ENCODE measurements at regions of chr3 and their contacts with region 1.

Region 1: GRCh38 chr3:102038477-102039142 is 189.3 kb downstream of the NFKBIZ start:
- DNase-seq: peak; percentile 94
- ATAC-seq: peak; percentile 88
- H3K4me3 ChIP-seq: no peak overlapping the region
- H3K27ac ChIP-seq: peak overlapping the region; percentile 74
- H3K4me1 ChIP-seq: peaks cover 51% of the 10 kb centered on the region
- H3K27me3 ChIP-seq: no peaks in the 10 kb centered on the region
- CTCF ChIP-seq: no peak
- EP300 ChIP-seq: peak; percentile 87 to 94
- POLR2A ChIP-seq: no peak
- RAD21 ChIP-seq: no peak

Region 2: DNA sequence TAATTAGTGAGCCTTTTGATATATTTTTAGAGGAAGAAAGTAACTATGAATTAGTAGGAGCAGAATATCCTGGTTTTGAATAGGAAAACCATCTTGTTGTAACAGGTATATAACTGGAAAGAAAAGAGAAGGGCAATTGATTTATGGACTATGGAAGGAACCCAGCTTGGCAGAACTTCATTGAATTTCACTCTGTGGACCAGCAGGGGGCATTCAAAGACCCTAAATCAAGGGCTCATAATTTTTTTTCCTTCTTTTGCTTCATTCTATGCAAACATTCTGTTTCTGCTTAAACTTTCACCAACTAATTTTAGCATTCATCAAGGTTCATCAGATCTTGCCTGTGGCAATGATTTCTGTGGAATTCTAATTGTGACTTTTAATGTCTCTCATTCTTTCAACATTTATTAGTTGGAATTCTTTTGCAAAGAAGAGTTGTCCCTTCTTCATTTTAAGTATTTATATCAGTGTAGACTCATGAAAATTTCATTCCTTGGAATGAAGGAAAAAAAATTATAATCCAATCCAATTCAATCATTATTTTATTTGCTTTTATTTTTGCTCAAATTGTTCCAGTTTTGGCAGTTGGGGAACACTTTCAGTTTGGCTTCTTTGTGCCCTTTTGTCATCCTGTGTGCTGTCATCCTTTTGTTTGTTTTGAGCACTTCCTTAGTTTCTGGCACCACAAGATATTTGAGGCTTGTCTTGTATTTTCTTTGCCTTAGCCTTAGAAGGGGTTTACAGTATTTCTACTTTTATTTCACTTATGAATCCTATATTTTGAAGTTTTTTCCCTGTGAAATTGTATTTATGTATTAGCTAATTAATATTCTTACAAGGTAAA is 229.2 kb before region 1 on chr3:
- CTCF ChIA-PET with region 1: interaction called, 14 read pairs
- POLR2A ChIA-PET with region 1: no interaction called
- RAD21 ChIA-PET with region 1: interaction called, 17 read pairs
- SMC1A ChIA-PET with region 1: interaction called, 13 read pairs
- in situ Hi-C with region 1: no loop called
- intact Hi-C with region 1: loop called (anchors 5 kb)
- DNase-seq: no peak
- ATAC-seq: peak; percentile 64
- H3K4me3 ChIP-seq: no peak overlapping the region
- H3K27ac ChIP-seq: no peak overlapping the region
- H3K4me1 ChIP-seq: peaks cover 15% of the 10 kb centered on the region
- H3K27me3 ChIP-seq: no peaks in the 10 kb centered on the region
- CTCF ChIP-seq: peak; percentile 56 to 84 (median 65); a peak in 5 of 6 replicates
- EP300 ChIP-seq: no peak
- POLR2A ChIP-seq: no peak
- RAD21 ChIP-seq: peak; percentile 82

Region 3: GRCh38 chr3:101849051-101849720 is 189.4 kb before region 1 on chr3 and contains the start of gene NFKBIZ:
- CTCF ChIA-PET with region 1: interaction called, 4 read pairs
- POLR2A ChIA-PET with region 1: interaction called, 8 read pairs
- RAD21 ChIA-PET with region 1: interaction called, 27 read pairs
- SMC1A ChIA-PET with region 1: interaction called, 19 read pairs
- in situ Hi-C with region 1: no loop called
- intact Hi-C with region 1: loop called (anchors 2 kb)
- DNase-seq: no peak
- ATAC-seq: peak; percentile 78
- H3K4me3 ChIP-seq: peak within 1 kb of the TSS; percentile 75
- H3K27ac ChIP-seq: peak within 1 kb of the TSS; percentile 93
- H3K4me1 ChIP-seq: peaks cover 16% of the 10 kb centered on the region
- H3K27me3 ChIP-seq: no peaks in the 10 kb centered on the region
- CTCF ChIP-seq: no peak
- EP300 ChIP-seq: no peak
- POLR2A ChIP-seq: peak; percentile 95
- RAD21 ChIP-seq: no peak
- polyA plus RNA-seq, gene NFKBIZ: 6.3 to 8.9 TPM

Region 4: DNA sequence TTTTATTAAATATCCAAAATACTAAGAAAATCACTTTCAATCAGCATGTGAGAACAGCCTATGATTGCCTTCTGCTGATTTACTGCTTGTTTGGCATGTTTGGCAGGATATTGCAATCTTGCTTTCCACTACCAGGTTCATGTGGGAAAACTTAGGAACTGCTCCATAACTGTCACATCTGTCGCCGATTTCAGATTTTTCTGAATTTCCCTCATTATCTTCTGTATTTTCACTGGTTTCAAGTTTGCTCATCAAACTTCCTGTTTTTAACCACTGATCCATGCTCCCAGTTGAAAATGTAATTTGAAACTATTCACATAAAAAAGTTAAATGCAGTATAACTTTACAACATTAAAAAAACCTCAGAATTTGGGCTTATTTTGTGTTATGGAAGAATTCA is 96.3 kb before region 1 on chr3:
- CTCF ChIA-PET with region 1: no interaction called
- POLR2A ChIA-PET with region 1: interaction called, 6 read pairs
- RAD21 ChIA-PET with region 1: interaction called, 64 read pairs
- SMC1A ChIA-PET with region 1: interaction called, 19 read pairs
- in situ Hi-C with region 1: no loop called
- intact Hi-C with region 1: loop called (anchors 5 kb)
- DNase-seq: no peak
- ATAC-seq: peak; percentile 1; the same call in 2 of the 3 replicates
- H3K4me3 ChIP-seq: no peak overlapping the region
- H3K27ac ChIP-seq: peak overlapping the region; percentile 23; the same call in 1 of the 2 replicates
- H3K4me1 ChIP-seq: peaks cover 48% of the 10 kb centered on the region
- H3K27me3 ChIP-seq: no peaks in the 10 kb centered on the region
- CTCF ChIP-seq: no peak
- EP300 ChIP-seq: peak; percentile 72 to 78; a peak in 3 of 4 replicates
- POLR2A ChIP-seq: no peak
- RAD21 ChIP-seq: no peak

Region 5: DNA sequence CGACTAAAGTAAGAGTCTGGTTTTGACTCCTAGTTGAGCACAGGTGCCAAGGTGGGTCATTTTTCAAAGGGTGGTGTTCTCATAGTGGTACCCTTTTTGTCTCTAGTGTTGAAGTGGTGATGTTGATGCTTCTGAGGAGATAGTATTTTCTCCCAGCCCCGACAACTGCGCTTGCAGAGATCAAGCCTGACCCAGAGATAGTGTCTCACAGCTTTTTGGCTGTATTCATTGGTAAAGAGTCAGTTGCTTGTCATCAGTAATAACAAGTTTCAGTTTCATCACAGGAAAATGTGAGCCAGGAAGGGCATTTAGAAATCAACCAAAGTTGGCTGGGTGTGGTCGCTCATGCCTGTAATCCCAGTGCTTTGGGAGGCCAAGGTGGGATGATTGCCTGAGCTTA is 50.0 kb before region 1 on chr3:
- CTCF ChIA-PET with region 1: interaction called, 9 read pairs
- POLR2A ChIA-PET with region 1: interaction called, 6 read pairs
- RAD21 ChIA-PET with region 1: interaction called, 49 read pairs
- SMC1A ChIA-PET with region 1: interaction called, 16 read pairs
- in situ Hi-C with region 1: no loop called
- intact Hi-C with region 1: loop called (anchors 2 kb)
- DNase-seq: no peak
- ATAC-seq: peak; percentile 65
- H3K4me3 ChIP-seq: no peak overlapping the region
- H3K27ac ChIP-seq: peak overlapping the region; percentile 59
- H3K4me1 ChIP-seq: peaks cover 28% of the 10 kb centered on the region
- H3K27me3 ChIP-seq: no peaks in the 10 kb centered on the region
- CTCF ChIP-seq: no peak
- EP300 ChIP-seq: 0 out of 4 replicates have a peak, but pooled peaks of 1 of the 2 experiments have one; percentile 30
- POLR2A ChIP-seq: no peak
- RAD21 ChIP-seq: no peak

Region 6: GRCh38 chr3:102018551-102018950 is 20.1 kb before region 1 on chr3:
- CTCF ChIA-PET with region 1: interaction called, 4 read pairs
- POLR2A ChIA-PET with region 1: interaction called, 3 read pairs
- RAD21 ChIA-PET with region 1: interaction called, 7 read pairs
- SMC1A ChIA-PET with region 1: interaction called, 11 read pairs
- in situ Hi-C with region 1: no loop called
- intact Hi-C with region 1: no loop called
- DNase-seq: no peak
- ATAC-seq: no peak
- H3K4me3 ChIP-seq: no peak overlapping the region
- H3K27ac ChIP-seq: no peak overlapping the region
- H3K4me1 ChIP-seq: peaks cover 8% of the 10 kb centered on the region; the same call in 1 of the 2 replicates
- H3K27me3 ChIP-seq: no peaks in the 10 kb centered on the region
- CTCF ChIP-seq: no peak
- EP300 ChIP-seq: no peak
- POLR2A ChIP-seq: no peak
- RAD21 ChIP-seq: no peak

Region 7: DNA sequence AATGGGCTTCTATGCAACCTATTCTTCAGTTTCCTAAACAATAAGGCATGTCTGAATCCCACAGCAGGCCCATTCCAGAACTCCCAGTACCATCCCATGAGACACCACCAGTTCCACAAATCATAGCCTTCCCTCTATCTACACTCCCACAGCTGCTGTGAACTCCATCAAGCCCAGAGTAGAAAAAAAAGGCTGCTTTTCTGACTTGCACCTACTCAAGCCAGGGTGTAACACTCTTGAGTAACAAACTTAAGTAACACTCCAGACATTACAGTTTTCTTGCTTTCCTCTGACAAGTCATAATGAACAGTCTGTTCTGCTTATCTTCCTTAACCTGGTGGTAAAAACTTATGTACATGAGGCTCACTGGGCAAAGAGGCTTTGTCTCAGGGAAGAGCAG is 93.8 kb after region 1 on chr3:
- CTCF ChIA-PET with region 1: no interaction called
- POLR2A ChIA-PET with region 1: no interaction called
- RAD21 ChIA-PET with region 1: no interaction called
- SMC1A ChIA-PET with region 1: no interaction called
- in situ Hi-C with region 1: no loop called
- intact Hi-C with region 1: no loop called
- DNase-seq: no peak
- ATAC-seq: no peak
- H3K4me3 ChIP-seq: no peak overlapping the region
- H3K27ac ChIP-seq: no peak overlapping the region
- H3K4me1 ChIP-seq: no peaks in the 10 kb centered on the region
- H3K27me3 ChIP-seq: no peaks in the 10 kb centered on the region
- CTCF ChIP-seq: no peak
- EP300 ChIP-seq: no peak
- POLR2A ChIP-seq: no peak
- RAD21 ChIP-seq: no peak

Region 8: DNA sequence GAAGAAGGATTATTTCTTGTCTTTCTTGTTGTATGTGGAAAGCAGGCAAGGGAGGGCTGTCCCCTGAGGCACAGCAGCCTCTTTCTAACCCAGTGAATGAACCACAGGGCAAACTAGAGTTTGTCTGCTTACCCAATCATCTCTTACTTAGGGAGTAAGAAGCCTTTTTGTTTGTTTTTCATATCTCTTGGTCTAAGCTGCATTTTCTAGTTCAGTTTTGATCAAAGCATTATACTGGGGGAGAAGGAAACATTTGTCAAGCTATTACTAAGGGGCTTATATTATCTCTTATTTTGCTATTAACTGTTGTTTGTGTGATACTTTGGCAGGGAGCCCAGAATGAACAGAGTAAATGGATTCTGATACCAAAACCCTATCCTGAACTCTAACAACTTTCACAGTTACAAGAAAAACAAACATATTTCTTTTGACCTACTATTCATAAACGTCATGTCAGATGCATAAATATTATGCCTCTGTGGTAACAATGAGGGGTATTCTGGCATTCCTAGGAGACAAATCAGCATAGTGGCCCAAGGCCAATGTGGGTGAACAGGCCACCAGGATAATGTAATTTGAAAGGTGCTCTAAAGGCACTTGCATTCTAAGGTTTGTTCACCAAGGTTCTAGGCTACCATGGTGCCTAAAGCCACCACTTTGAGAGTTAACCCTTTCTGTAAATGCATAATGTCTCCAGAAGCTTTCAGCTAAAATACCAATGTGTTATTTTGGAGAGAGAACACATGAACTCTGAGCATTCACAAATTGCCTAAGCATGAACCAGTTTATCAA is 124.6 kb after region 1 on chr3:
- CTCF ChIA-PET with region 1: no interaction called
- POLR2A ChIA-PET with region 1: no interaction called
- RAD21 ChIA-PET with region 1: no interaction called
- SMC1A ChIA-PET with region 1: no interaction called
- in situ Hi-C with region 1: no loop called
- intact Hi-C with region 1: no loop called
- DNase-seq: no peak
- ATAC-seq: peak; percentile 38; the same call in 2 of the 3 replicates
- H3K4me3 ChIP-seq: no peak overlapping the region
- H3K27ac ChIP-seq: no peak overlapping the region
- H3K4me1 ChIP-seq: no peaks in the 10 kb centered on the region
- H3K27me3 ChIP-seq: no peaks in the 10 kb centered on the region
- CTCF ChIP-seq: no peak
- EP300 ChIP-seq: no peak
- POLR2A ChIP-seq: no peak
- RAD21 ChIP-seq: no peak

Measured in GM12878 (cell line).